PC-3 (cell line): ENCODE measurements at regions of chr9 and their contacts with region 1.

Region 1: GRCh38 chr9:130895481-130896232 is 955 bp downstream of the QRFP start:
- DNase-seq: no peak
- ATAC-seq: peak; percentile 25; the same call in 1 of the 2 replicates
- H3K4me3 ChIP-seq: no peak overlapping the region
- H3K27ac ChIP-seq: no peak overlapping the region
- H3K4me1 ChIP-seq: no peaks in the 10 kb centered on the region
- H3K27me3 ChIP-seq: no peaks in the 10 kb centered on the region
- CTCF ChIP-seq: no peak

Region 2: DNA sequence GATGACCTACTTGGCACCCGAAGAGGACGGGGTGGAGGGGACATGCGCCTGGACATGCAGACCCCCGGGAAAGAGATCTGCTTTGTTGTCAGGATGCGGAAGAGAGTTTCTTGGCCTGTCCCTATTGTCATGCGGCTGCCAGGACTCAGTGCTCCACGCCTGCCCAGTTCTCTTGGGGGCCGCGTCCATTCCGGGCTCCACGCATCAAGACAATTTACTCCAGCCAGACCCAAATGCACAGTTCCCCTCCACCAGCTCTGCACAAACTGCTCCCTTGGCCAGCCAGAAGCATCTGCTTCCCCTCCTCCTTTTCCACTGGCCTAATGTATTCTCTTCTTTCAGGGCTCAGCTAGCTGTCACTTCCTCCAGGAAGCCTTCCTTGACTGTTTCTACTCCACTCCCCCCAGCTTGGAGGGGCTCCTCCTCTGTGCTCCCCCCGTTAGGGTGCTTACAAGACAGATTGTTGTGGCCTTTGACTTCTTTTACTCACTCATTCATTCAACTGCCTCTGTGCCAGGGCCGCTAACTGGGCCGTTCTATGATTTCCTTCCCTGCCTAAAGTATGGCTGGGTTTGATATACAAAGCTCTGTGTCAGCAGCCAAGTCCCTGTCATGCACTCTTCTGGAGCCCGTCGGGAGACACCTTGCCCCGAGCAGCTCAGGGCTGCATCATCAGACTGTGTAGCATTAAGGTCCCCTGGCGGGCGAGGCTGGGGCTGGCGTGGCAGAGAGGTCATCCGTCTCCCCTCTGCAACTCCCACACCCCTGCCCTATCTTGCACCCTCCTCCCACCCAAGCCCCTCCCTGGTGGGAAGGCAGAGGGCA is 36.8 kb after region 1 on chr9:
- CTCF ChIA-PET with region 1: interaction called, 4 read pairs
- POLR2A ChIA-PET with region 1: no interaction called
- intact Hi-C with region 1: loop called (anchors 5 kb)
- DNase-seq: peak; percentile 48
- ATAC-seq: peak; percentile 58
- H3K4me3 ChIP-seq: peak overlapping the region; percentile 48
- H3K27ac ChIP-seq: peak overlapping the region; percentile 39
- H3K4me1 ChIP-seq: peaks cover 41% of the 10 kb centered on the region
- H3K27me3 ChIP-seq: no peaks in the 10 kb centered on the region
- CTCF ChIP-seq: peak; percentile 49